ENCODE measurements at regions of chr13 and their contacts with region 1.

Region 1: DNA sequence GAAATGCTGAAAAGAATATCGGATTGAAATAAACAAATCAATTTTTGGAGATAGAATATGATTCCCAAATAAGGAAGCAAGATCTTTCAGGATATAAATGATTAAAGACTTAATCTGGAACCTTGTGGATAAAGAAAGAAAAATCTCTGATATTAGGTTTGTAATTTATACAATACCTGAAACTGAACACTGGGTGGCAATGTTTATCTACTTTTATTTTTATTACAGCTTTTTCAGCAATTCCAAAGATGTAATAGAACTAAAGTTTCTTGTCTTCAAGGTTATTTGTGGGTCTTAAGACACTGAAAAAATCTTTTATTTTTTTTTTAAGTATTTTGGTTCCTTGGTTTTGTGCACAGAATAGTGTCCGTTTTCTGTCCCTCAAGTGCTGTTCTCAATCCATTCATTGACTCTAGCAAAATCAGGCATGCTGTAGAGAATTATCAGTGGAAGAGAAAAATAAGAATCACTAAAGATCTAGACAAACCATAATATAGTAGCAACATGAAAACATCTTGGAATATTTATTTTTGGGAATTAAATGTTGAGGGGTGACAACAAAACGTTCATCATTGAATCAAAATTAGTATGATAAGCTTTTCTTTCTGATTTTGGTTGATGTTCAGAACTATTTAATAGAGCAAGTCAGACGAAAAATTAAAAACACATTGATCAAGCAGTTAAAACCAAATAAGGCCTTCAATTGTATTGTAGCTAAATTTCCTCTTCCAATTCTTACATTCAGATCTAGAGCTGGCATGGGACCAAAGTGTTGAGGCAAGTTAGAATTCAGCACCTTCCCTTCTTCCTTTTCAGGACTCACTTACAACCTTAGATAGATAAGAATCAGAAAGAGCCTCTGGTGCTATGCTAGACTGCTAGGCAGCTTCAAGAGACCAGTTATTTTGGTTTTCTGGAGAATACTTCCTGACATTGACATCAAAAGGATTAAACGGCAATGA is 704.4 kb upstream of the PCDH20 start:
- DNase-seq: peak; percentile 31
- ATAC-seq: no peak
- H3K4me3 ChIP-seq: no peak overlapping the region
- H3K27ac ChIP-seq: no peak overlapping the region
- H3K4me1 ChIP-seq: no peaks in the 10 kb centered on the region
- H3K27me3 ChIP-seq: no peaks in the 10 kb centered on the region
- CTCF ChIP-seq: peak; percentile 53; the same call in 1 of the 2 replicates

Region 2: DNA sequence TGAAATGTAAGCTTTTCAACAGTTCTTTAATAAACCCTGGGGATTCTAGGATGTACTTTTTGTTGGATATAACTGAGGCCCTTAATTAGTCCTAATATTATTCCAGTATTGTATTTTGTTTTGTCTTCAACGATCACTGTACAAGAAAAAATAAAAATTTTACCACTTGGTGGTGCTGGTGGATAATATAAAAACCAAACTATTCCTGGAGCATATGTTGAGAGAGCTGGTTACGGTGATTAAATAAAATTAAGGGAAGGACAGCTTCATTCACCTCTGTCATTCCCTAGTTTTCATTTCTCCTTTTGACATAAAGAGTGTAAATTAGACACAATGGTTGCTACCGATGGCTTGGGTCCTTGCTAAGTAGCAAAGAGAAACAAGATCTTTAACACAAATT is 105.7 kb before region 1 on chr13:
- CTCF ChIA-PET with region 1: no interaction called
- POLR2A ChIA-PET with region 1: no interaction called
- intact Hi-C with region 1: loop called (anchors 1 kb)
- DNase-seq: peak; percentile 54
- ATAC-seq: peak; percentile 53; the same call in 1 of the 2 replicates
- H3K4me3 ChIP-seq: peak overlapping the region; percentile 46; the same call in 1 of the 2 replicates
- H3K27ac ChIP-seq: no peak overlapping the region
- H3K4me1 ChIP-seq: no peaks in the 10 kb centered on the region
- H3K27me3 ChIP-seq: no peaks in the 10 kb centered on the region
- CTCF ChIP-seq: peak; percentile 49